ENCODE measurements at regions of chr17 and their contacts with region 1.

Region 1: GRCh38 chr17:64025732-64026294 is 5.4 kb upstream of the ICAM2 start:
- DNase-seq: peak; percentile 47
- ATAC-seq: peak; percentile 87
- H3K4me3 ChIP-seq: peak overlapping the region; percentile 6 to 34; a peak in 3 of 4 replicates
- H3K27ac ChIP-seq: no peak overlapping the region
- H3K4me1 ChIP-seq: no peaks in the 10 kb centered on the region
- H3K27me3 ChIP-seq: no peaks in the 10 kb centered on the region
- CTCF ChIP-seq: peak; percentile 94

Region 2: DNA sequence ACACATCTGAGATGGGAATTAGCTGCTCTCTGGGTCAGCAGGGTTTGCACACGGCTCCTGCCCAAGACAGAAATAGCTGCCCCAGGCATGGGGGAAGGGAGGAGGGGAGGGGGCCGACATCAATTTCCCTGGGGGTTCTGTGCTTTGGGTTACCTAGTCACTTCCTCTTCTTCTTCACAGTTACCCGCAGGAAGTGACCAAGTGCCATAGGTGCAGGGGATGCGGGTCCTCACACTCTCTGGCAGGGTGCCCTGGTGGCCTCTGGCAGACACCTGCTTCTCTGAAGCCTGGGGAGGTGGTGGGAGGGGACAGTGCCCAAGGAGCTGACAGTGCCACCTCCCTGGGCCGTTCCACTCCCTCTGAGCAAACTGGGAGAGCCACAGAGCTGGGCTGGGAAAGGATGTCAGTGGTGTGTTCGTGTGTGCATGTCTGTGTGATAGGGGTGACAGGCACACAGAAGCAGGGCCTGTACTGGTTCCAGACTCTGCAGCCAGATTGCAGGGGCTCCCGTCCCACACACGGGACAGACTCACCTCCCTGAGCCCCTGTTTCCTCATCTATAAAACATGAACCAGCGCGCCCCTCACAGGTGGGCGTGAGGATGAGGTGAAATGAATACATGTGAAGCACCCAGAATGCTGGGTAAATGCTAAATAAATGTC is 71.3 kb before region 1 on chr17:
- CTCF ChIA-PET with region 1: interaction called, 4 read pairs
- POLR2A ChIA-PET with region 1: interaction called, 14 read pairs
- in situ Hi-C with region 1: no loop called
- intact Hi-C with region 1: no loop called
- DNase-seq: no peak
- ATAC-seq: no peak
- H3K4me3 ChIP-seq: no peak overlapping the region
- H3K27ac ChIP-seq: no peak overlapping the region
- H3K4me1 ChIP-seq: no peaks in the 10 kb centered on the region
- H3K27me3 ChIP-seq: no peaks in the 10 kb centered on the region
- CTCF ChIP-seq: no peak

Region 3: DNA sequence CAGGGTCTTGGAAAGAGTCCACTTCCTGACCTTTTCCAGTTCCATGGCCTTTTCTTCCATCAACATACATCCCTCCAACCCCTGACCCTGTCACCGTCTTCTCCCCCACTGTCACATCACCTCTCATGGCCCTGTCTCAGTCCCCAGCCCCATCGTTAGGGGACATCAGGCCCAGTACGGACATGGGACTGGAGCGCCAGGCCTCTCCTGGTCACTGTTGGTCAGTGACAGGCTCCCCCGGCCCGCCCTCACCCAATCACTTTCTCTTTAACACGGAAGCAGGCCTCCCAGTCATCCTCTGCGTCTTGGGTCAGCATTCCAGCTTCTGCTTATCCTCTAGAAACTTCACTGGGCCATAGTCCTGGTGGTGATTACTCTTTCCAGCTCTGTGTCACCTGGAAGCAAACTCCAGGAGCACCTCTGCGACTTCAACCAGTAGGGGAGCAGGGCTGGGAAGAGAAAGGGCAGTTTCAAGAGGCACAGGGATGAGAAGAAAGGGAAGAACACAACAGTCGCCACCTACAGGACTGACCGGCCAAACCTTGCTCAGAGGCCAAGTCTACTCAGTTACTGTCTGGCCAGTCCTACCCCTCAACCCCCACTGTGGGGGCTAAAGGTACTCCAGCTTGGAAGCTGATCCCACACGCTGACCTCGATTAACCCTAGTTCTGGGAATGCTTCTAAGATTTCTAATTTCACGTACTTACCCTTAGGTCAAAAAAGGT is 10.5 kb after region 1 on chr17:
- CTCF ChIA-PET with region 1: no interaction called
- POLR2A ChIA-PET with region 1: no interaction called
- in situ Hi-C with region 1: no loop called
- intact Hi-C with region 1: no loop called
- DNase-seq: no peak
- ATAC-seq: no peak
- H3K4me3 ChIP-seq: no peak overlapping the region
- H3K27ac ChIP-seq: no peak overlapping the region
- H3K4me1 ChIP-seq: no peaks in the 10 kb centered on the region
- H3K27me3 ChIP-seq: no peaks in the 10 kb centered on the region
- CTCF ChIP-seq: no peak

Region 4: DNA sequence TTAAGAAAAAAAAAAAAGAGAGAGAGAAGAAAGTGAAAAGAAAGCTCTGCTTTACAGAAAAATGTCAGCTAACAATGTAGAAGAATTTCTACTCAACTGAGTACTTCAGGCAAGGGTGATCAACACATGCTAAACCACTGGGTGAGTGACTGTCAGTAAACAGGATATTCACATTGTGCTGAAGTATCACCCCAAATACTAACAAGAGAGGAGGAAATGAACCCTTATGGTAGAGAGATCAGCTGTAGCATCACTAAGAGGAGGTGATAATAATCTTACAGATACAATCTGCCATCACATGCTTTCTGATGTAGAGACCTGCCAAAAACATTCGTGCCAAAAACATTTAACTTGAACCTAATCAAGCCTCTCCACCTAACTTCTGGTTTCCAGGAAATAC is 25.3 kb after region 1 on chr17:
- CTCF ChIA-PET with region 1: no interaction called
- POLR2A ChIA-PET with region 1: no interaction called
- in situ Hi-C with region 1: no loop called
- intact Hi-C with region 1: no loop called
- DNase-seq: no peak
- ATAC-seq: no peak
- H3K4me3 ChIP-seq: no peak overlapping the region
- H3K27ac ChIP-seq: no peak overlapping the region
- H3K4me1 ChIP-seq: no peaks in the 10 kb centered on the region
- H3K27me3 ChIP-seq: no peaks in the 10 kb centered on the region
- CTCF ChIP-seq: no peak

Region 5: GRCh38 chr17:64129764-64130558 is 104.1 kb after region 1 on chr17 and contains the start of gene ERN1:
- CTCF ChIA-PET with region 1: interaction called, 66 read pairs
- POLR2A ChIA-PET with region 1: interaction called, 3 read pairs
- in situ Hi-C with region 1: no loop called
- intact Hi-C with region 1: loop called (anchors 1 kb)
- DNase-seq: no peak
- ATAC-seq: peak; percentile 96
- H3K4me3 ChIP-seq: peak within 1 kb of the TSS; percentile 77 to 80
- H3K27ac ChIP-seq: peak within 1 kb of the TSS; percentile 79
- H3K4me1 ChIP-seq: peaks cover 6% of the 10 kb centered on the region; the same call in 1 of the 2 replicates
- H3K27me3 ChIP-seq: no peaks in the 10 kb centered on the region
- CTCF ChIP-seq: no peak
- total RNA-seq, gene ERN1: 12.1 TPM

Region 6: DNA sequence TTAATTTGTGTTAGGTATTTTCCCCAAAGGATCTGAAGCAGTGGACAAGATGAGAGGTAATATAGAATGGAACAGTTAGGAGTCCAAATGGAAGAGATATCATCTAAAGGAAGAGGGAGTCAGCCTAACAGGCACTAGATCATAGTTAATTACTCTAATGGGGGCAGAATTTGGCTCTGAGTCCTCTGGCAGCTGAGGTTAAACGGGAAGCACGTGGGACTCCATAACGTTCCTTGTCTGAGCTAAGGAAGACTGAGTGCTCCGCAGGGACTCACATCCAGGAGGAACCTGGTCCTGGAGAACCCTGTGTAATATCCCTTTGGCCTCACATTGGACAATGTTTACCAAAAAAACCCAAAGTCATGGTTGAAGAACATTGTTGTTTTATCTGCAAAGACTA is 283.9 kb after region 1 on chr17:
- CTCF ChIA-PET with region 1: no interaction called
- POLR2A ChIA-PET with region 1: no interaction called
- in situ Hi-C with region 1: no loop called
- intact Hi-C with region 1: no loop called
- DNase-seq: no peak
- ATAC-seq: no peak
- H3K4me3 ChIP-seq: no peak overlapping the region
- H3K27ac ChIP-seq: no peak overlapping the region
- H3K4me1 ChIP-seq: no peaks in the 10 kb centered on the region
- H3K27me3 ChIP-seq: no peaks in the 10 kb centered on the region
- CTCF ChIP-seq: no peak

Measured in Panc1 (cell line).